Activated naive CD4-positive, alpha-beta T cell treated with anti-CD3 and anti-CD28 coated beads for 36 hours (primary cell): ENCODE measurements at regions of chr6 and their contacts with region 1.

Region 1: GRCh38 chr6:28335564-28336283 is at the start of gene ZSCAN31:
- DNase-seq: peak; percentile 90
- H3K4me3 Mint-ChIP-seq: no peak within 1 kb of the TSS
- H3K27ac Mint-ChIP-seq: no peak within 1 kb of the TSS
- H3K4me1 Mint-ChIP-seq: peaks cover 4% of the 10 kb centered on the region
- H3K27me3 Mint-ChIP-seq: no peaks in the 10 kb centered on the region
- total RNA-seq, gene ZSCAN31: 0.62 to 0.89 TPM

Region 2: DNA sequence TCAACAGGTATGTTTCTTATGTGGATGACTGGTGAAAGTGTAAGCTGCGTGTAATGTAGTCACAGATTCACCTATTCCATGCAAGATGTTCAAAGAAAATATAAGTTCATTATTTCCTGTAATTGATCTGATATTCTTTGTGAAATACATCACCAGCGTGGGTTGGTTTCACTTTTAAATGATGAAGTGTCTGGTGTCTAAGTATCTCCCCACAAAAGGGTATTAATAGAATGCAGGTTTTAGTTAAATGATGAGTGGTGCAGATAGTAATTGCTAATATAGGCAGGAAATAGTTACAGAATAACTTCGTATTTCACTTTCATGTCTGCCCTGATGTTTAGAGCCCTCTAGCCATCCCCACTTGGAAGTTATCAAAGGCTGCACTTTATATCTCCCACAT is 32.2 kb before region 1 on chr6:
- CTCF ChIA-PET with region 1: no interaction called
- intact Hi-C with region 1: loop called (anchors 2 kb)
- DNase-seq: no peak
- H3K4me3 Mint-ChIP-seq: peak overlapping the region; percentile 15
- H3K27ac Mint-ChIP-seq: peak overlapping the region; percentile 0
- H3K4me1 Mint-ChIP-seq: peaks cover 23% of the 10 kb centered on the region
- H3K27me3 Mint-ChIP-seq: peaks cover 9% of the 10 kb centered on the region

Region 3: DNA sequence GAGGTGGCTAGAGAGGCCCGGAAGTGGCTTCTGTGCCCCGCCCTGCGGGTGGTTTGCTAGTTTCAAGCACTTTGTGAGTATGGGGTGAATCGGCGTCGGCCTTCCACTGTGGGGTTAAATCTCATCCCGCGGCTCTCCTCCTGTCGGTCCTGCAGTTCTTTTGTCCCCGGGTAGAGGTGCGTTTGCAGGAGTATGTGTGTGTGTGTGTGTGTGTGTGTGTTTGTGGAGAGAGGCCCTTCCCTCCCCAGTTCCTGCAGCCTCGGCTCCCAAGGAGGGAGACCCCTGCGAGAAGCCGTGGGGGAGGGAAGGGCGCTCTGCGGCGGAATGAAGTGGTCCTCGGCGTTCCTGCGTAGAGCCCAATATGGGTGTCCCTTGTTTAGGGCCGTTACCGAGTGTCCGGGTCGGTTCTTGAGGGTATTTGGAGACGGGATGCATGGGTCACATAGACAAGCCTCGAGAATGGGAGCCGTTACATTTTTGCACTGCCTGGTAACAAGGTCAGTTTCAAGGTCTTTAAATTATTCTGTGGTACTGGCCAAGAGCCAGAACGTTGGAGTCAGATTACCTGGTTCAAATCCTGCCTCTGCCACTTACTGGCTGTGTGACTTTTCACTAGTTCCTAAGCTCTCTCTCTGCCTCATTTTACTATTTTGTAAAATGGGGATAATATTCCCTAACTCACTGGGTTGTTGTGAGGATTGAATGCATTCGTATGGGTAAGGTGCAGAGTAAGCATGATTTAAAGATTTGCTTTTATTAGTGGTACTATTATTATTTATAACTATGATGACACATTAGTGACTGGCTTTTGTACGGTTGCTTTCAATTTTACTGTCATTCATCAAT is 14.4 kb after region 1 on chr6 and contains the start of gene ZKSCAN3:
- CTCF ChIA-PET with region 1: interaction called, 10 read pairs
- intact Hi-C with region 1: loop called (anchors 1 kb)
- DNase-seq: peak; percentile 93
- H3K4me3 Mint-ChIP-seq: peak within 1 kb of the TSS; percentile 97
- H3K27ac Mint-ChIP-seq: peak within 1 kb of the TSS; percentile 87
- H3K4me1 Mint-ChIP-seq: peaks cover 22% of the 10 kb centered on the region
- H3K27me3 Mint-ChIP-seq: peaks cover 6% of the 10 kb centered on the region
- total RNA-seq, gene ZKSCAN3: 1.3 TPM

Region 4: DNA sequence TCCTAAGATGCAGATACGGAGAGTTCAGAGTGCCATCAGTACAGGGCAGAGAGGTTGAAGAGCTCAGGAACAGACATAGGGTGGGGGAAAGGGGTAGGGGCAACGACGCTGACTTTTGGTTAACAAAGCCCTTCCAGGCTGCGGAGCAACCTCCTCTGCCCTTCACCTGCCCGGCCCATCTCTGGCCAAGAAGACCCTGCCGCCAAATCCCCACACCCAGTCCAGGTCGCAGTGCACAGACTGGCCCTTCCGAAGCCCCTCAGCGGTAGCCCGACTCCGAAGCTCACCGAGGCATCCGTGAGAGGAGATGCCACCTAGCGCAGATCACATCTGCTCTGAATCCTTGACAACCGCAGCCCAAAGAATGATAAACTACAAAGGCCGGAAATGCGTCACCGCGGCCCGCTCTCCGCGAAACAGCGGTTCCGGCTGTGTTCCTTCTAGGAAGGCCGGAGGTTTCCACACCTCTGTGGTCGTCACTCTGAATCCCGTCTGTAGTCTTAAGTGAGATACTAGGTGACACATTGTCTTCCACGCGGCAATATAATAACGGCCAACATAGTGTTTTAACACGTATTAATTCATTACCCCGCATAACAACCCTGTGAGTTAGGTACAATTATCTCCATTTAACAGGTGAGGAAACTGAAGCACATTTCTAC is 107.5 kb after region 1 on chr6 and contains the start of gene ZSCAN23:
- CTCF ChIA-PET with region 1: no interaction called
- intact Hi-C with region 1: no loop called
- DNase-seq: peak; percentile 93
- H3K4me3 Mint-ChIP-seq: peak within 1 kb of the TSS; percentile 98
- H3K27ac Mint-ChIP-seq: peak within 1 kb of the TSS; percentile 87
- H3K4me1 Mint-ChIP-seq: peaks cover 31% of the 10 kb centered on the region
- H3K27me3 Mint-ChIP-seq: peaks cover 24% of the 10 kb centered on the region
- total RNA-seq, gene ZSCAN23: 1.7 to 2.0 TPM